Posterior cingulate gyrus (tissue), 11 donors: ENCODE measurements at regions of chr15 and their contacts with region 1.

Region 1: DNA sequence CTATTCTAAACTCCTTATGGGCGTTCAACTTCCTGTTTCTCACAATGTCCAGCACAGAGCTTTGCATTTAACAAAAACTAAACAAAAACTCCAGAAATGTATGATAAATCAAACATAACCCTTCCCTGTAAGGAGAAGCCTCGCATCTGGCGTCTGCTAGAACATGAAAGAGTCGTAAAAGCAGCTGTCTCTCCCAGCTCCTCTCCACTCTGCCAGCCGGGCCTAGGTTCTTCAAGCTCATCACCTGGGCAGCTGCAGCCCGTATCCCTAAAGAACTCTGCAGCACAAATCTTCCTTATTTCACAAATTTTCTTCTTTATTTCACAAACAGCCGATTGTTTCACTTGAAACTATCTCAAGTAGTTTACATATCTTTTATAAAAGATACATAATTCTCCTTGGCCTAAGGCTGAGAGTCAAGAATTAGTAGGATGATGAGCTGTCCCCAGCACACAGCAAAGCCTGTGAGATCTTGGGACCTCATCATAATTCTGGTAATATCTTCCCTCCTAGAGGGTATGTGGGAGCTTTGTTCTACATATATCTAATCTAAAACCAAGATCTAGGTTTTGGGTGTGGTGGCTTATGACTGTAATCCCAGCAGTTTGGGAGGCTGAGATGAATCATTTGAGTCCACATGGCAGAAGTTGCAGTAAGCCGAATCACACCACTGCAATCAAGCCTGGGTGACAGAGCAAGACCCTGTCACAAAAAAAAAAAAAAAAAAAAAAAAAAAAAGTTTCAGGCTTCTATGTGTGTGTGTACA is 35.3 kb downstream of the ANXA2 start:
- DNase-seq: no peak

Region 2: DNA sequence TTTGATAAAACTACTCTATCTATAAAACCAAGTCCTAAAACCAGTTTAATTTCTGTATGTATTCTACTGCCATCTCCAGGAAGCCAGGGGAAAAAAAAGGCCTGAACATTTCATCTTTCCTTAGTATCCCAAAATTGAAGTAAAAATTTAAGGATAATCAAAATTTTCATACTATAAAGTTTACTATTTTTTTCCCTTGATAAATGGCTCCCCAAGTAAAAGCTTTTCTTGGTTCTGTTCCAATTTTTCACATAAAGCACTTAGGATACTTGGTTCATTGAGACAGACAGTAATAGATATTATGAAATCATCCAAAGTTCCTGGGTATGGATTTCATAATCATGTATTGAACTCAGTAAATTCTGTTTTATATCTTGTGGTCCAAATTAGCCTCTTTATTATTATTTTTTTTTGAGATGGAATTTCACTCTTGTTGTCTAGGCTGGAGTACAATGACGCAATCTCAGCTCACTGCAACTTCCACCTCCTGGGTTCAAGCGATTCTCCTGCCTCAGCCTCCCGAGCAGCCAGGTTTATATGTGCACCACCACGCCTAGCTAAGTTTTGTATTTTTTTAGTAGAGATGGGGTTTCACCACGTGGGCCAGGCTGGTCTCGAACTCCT is 81.9 kb after region 1 on chr15:
- intact Hi-C with region 1: loop called (anchors 5 kb)
- DNase-seq: peak in 1 of 10 donors; percentile 66

Region 3: DNA sequence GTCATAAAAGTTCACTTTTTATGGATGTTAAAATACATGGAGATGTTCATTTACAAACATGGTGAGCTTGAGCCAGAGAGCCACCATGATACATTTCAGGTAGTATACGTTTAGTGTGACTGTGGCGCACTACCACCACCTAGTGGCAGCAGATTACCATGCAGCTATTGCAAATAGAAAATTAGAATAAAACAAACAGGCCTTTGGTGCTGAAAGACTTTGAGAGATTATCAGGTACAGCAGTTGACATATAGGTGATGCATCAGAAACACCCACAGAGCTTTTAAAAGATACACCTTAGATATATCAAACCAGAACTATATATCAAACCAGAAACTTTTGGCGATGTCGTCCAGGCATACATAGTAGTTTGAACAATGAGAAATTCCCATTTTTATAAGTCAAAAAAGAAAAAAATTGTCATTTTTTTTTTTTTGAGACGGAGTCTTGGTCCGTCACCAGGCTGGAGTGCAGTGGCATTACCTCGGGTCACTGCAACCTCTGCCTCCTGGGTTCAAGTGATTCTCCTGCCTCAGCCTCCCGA is 158.4 kb after region 1 on chr15:
- intact Hi-C with region 1: loop called (anchors 2 kb)
- DNase-seq: peak in 7 of 10 donors; percentile 50 to 91 (median 69)

Region 4: GRCh38 chr15:60916679-60917460 is 554.4 kb after region 1 on chr15:
- intact Hi-C with region 1: loop called (anchors 5 kb)
- DNase-seq: peak; percentile 69 to 97 (median 84)

Region 5: DNA sequence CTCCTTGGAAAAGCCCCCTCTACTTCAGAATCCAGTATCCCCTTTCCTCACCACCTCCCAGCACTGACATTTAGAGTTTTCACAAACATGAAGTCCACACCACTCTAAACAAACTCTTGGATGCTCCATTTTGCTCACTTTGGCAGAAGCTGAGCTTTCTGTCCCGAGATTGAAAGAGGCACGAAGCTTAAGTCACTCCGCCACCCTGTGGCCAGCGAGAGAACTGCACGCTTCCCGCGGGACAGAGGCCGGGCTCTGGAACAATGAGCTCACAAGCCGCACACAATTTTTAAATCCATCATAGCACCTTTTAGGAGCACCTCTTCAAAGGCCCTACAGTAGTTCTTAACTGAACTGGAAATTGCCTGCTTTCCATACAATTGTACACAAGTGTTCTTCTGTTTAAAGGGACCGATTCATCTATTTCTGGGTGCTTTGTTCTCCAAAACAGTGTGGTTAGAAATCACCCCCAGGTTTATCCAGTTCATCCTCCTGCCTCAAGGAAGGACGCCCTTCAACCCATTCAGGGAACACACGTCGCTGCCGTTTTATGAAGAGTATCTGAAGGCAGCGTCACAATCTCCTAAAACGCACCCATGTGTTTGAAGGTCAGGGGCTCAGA is 1471.7 kb after region 1 on chr15:
- intact Hi-C with region 1: loop called (anchors 5 kb)
- DNase-seq: peak; percentile 66 to 98 (median 90)